ENCODE measurements at regions of chr1 and their contacts with region 1.

Region 1: GRCh38 chr1:184982002-184982954 is 8.0 kb upstream of the NIBAN1 start:
- DNase-seq: peak; percentile 65
- ATAC-seq: peak; percentile 94
- H3K4me3 ChIP-seq: no peak overlapping the region
- H3K27ac ChIP-seq: no peak overlapping the region
- H3K4me1 ChIP-seq: no peaks in the 10 kb centered on the region
- H3K27me3 ChIP-seq: no peaks in the 10 kb centered on the region
- CTCF ChIP-seq: peak; percentile 88

Region 2: GRCh38 chr1:184691719-184692324 is 290.5 kb before region 1 on chr1:
- CTCF ChIA-PET with region 1: no interaction called
- POLR2A ChIA-PET with region 1: no interaction called
- intact Hi-C with region 1: no loop called
- DNase-seq: peak; percentile 53
- ATAC-seq: no peak; the same call in 1 of the 2 replicates
- H3K4me3 ChIP-seq: no peak overlapping the region
- H3K27ac ChIP-seq: no peak overlapping the region
- H3K4me1 ChIP-seq: no peaks in the 10 kb centered on the region
- H3K27me3 ChIP-seq: no peaks in the 10 kb centered on the region
- CTCF ChIP-seq: peak; percentile 74

Region 3: DNA sequence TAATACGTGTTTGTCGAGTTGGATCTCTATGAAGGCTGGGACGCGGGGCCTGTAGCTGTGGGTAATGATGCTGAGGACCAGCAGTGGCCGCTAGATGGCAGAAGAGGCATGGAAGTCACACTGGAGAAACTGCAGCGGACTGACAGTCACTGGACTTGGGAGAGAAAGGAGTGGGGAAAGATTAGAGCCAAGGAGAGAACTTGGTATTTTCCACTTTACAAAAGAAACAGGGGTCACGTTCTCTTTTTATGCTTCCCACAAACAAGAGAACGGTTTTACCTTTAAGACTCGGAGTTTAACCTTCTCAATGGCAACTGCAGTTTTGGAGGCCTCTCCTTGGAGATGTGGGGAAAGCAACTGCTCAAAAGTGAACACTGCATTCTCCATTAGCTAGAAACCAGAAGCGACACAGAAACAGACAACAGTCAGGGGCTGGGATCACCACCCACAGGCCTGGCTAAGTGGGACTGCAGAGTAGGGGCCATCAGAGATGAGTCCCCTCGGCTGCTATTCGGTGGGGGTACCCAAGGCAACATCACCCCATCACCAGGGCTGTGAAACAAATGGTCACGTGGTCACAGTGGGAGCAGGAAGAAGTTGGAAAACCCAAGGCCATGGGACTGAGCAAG is 176.5 kb before region 1 on chr1:
- CTCF ChIA-PET with region 1: interaction called, 8 read pairs
- POLR2A ChIA-PET with region 1: no interaction called
- intact Hi-C with region 1: loop called (anchors 1 kb)
- DNase-seq: peak; percentile 78
- ATAC-seq: peak; percentile 94
- H3K4me3 ChIP-seq: no peak overlapping the region
- H3K27ac ChIP-seq: no peak overlapping the region
- H3K4me1 ChIP-seq: peaks cover 28% of the 10 kb centered on the region
- H3K27me3 ChIP-seq: no peaks in the 10 kb centered on the region
- CTCF ChIP-seq: peak; percentile 78

Region 4: GRCh38 chr1:185170291-185170848 is 188.1 kb after region 1 on chr1:
- CTCF ChIA-PET with region 1: interaction called, 8 read pairs
- POLR2A ChIA-PET with region 1: no interaction called
- intact Hi-C with region 1: loop called (anchors 1 kb)
- DNase-seq: peak; percentile 58
- ATAC-seq: peak; percentile 67
- H3K4me3 ChIP-seq: no peak overlapping the region
- H3K27ac ChIP-seq: no peak overlapping the region
- H3K4me1 ChIP-seq: no peaks in the 10 kb centered on the region
- H3K27me3 ChIP-seq: no peaks in the 10 kb centered on the region
- CTCF ChIP-seq: peak; percentile 89

Region 5: DNA sequence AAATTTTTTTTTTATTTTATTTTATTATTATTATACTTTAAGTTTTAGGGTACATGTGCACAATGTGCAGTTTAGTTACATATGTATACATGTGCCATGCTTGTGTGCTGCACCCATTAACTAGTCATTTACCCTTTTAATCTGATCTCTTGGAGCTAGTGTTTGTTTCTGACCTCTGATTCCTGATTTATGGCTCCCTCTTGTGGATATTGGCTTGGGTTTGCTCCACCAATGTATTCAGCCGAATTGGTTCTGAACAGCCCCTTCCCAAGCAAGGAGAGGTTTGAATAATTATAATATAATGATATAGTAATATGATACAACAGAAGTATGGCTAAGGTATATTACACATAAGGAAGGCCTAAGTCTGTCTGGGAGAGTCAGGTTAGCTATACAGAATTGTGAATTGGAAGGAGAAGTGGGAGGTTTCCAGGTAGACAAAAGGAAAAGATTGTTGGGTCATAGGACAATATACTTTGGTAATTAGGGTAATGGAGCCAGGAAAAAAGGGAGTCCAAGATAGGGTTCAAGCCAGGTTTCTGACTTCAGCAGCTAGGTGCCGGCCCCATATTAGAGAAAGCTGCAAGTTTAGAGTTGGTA is 698.9 kb after region 1 on chr1:
- CTCF ChIA-PET with region 1: interaction called, 7 read pairs
- POLR2A ChIA-PET with region 1: no interaction called
- intact Hi-C with region 1: loop called (anchors 2 kb)
- DNase-seq: peak; percentile 68
- ATAC-seq: peak; percentile 59
- H3K4me3 ChIP-seq: no peak overlapping the region
- H3K27ac ChIP-seq: no peak overlapping the region
- H3K4me1 ChIP-seq: no peaks in the 10 kb centered on the region
- H3K27me3 ChIP-seq: no peaks in the 10 kb centered on the region
- CTCF ChIP-seq: peak; percentile 61

Region 6: DNA sequence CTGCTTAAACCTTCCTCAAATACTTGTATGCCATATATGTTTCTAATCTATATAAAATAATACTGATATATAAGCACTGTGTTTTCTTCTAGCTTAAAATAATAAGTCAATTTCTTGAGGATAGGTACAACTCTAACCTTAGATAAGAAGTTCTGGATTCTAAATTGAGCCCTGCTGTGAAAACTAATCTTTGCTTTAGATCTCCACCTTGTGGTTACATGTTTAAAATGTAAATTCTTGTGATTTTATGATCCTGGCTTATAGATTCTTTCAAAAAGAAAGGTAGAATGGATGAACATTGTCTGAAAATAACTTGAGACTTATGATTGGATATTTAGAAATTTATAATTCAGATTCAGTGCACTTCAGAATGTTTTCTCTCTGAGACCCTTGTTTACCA is 713.0 kb after region 1 on chr1:
- CTCF ChIA-PET with region 1: no interaction called
- POLR2A ChIA-PET with region 1: no interaction called
- intact Hi-C with region 1: loop called (anchors 5 kb)
- DNase-seq: peak; percentile 34
- ATAC-seq: no peak
- H3K4me3 ChIP-seq: no peak overlapping the region
- H3K27ac ChIP-seq: no peak overlapping the region
- H3K4me1 ChIP-seq: peaks cover 11% of the 10 kb centered on the region
- H3K27me3 ChIP-seq: no peaks in the 10 kb centered on the region
- CTCF ChIP-seq: peak; percentile 52

Measured in PC-3 (cell line).